GM23248 (cell line): ENCODE measurements at regions of chr14 and their contacts with region 1.

Region 1: GRCh38 chr14:22852940-22853767 is 16.8 kb downstream of the MMP14 start:
- DNase-seq: peak; percentile 86
- H3K4me3 ChIP-seq: peak overlapping the region; percentile 80
- H3K27ac ChIP-seq: peak overlapping the region; percentile 100
- H3K4me1 ChIP-seq: peaks cover 44% of the 10 kb centered on the region
- H3K27me3 ChIP-seq: no peaks in the 10 kb centered on the region

Region 2: DNA sequence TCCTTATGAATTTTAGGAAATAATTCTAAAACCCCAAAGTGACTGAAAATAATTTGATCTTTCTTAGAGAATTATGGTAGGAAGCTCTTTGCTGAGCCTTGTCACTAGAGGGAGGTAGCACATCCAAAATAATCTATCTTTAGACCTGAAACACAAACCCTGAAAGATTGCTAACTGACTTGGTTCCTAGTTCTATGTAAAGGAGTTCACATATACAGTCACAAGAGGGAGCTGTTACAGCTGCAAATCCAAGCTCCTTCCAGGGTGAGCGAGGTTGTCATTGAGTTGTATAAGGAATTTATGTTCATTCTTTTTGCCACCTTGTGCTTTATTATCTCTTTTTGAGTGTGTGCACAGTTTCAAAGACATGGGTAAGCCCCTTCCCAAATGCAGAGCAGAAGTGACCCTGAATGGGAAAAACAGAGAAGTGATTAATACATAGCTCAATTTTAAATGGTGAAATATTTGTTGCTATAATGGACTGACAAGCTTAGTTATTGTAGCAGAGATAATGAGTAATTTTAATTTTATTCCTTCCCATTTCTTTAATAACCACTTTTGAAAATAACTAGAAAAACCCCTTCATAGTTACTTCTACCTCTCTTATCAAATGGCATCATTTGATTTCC is 652.1 kb before region 1 on chr14:
- in situ Hi-C with region 1: no loop called
- DNase-seq: peak; percentile 66
- H3K4me3 ChIP-seq: no peak overlapping the region
- H3K27ac ChIP-seq: no peak overlapping the region
- H3K4me1 ChIP-seq: no peaks in the 10 kb centered on the region
- H3K27me3 ChIP-seq: no peaks in the 10 kb centered on the region

Region 3: DNA sequence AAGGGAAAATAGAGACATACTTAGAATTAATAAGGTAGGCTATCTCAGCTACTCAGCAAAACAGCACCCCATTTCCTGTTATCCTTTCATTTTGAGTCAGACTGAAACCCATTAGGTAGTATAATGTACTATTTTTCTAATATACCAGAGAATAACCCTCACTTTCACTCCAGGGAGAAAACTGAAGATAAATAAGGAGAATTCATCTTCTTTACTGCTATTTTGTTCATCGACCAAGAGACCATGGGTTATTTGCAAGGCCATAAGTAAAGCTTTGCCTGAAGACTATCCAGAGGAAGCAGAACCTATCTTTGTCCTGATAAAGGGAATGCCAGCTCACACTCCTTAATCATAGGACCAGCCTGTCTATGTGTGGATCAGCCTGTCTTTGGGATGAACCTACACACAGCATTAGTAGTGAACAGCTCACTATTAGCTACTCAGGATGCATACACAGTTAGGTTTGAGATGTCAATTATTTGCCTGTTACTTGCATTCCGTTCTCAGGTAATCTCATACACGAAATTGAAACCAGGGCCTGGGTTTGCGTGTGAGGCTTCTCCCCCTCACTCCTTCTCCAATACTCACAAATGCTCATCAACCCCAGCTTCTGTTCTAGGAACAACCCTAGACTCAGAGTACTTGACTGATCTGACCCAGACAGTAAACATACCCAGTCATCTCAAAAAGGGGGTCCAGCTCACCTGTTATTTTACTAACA is 388.6 kb before region 1 on chr14:
- in situ Hi-C with region 1: no loop called
- DNase-seq: no peak
- H3K4me3 ChIP-seq: no peak overlapping the region
- H3K27ac ChIP-seq: no peak overlapping the region
- H3K4me1 ChIP-seq: peaks cover 18% of the 10 kb centered on the region
- H3K27me3 ChIP-seq: peaks cover 15% of the 10 kb centered on the region; the same call in 1 of the 2 replicates

Region 4: DNA sequence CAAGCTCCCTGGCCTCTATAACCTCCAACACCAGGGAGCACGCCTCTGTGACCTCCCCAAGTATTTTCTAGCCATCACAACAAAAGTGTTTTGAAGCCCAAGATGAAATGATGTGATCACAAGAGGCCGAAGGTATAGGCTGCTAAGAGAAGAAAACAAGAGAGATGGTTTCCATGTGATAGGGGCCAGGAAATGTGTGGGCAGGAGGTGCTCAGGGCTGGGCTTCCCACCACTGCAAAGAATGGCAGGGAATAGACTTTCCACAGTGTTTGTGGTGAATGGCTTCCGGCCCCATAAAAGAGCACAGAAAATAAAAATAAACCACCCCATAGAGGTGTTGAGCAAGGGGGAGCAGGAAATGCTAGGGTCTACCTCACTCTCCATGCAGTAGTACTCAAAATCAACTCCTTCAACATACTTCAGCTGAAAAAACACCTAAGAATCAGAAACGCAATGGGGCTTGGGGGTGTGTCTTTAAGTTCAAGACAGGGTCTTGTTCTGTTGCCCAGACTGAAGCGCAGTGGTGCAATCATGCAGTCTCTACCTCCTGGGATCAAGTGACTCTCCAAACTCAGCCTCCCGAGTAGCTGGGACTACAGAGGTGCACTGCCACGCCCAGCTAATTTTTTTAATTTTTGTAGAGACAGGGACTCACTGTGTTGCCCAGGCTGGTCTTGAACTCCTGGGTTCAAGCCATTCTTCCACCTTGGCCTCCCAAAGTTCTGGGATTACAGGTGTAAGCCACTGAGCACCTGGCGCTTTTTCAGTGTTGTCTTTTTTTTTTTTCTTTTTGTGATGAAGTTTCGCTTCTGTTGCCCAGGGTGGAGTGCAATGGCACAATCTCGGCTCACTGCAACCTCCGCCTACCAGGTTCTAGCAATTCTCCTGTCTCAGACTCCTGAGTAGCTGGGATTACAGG is 291.2 kb before region 1 on chr14:
- in situ Hi-C with region 1: loop called (anchors 10 kb)
- DNase-seq: no peak
- H3K4me3 ChIP-seq: no peak overlapping the region
- H3K27ac ChIP-seq: no peak overlapping the region
- H3K4me1 ChIP-seq: no peaks in the 10 kb centered on the region; the same call in 1 of the 2 replicates
- H3K27me3 ChIP-seq: no peaks in the 10 kb centered on the region